GM12878 (cell line): ENCODE measurements at regions of chr5 and their contacts with region 1.

Region 1: DNA sequence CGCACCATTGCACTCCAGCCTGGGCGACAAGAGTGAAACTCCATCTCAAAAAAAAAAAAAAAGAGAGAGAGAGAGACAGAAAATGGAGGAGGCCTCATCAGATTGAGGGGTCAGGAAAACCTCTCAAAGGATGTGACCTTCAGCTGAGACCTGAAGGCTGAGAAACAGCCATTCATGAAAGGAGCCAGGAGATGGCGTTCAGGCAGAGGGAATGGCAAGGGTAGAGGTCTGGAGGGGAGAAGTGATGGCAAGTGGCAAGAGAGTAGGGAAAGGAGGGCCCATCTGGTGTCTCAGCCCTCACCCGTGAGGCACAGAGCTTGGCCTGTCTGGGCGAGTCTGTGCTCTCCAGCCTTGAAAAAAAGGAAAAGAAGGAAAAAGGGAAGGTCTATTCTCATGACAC is 17.0 kb downstream of the CAMK2A start:
- DNase-seq: no peak
- ATAC-seq: peak; percentile 83
- H3K4me3 ChIP-seq: no peak overlapping the region
- H3K27ac ChIP-seq: no peak overlapping the region
- H3K4me1 ChIP-seq: no peaks in the 10 kb centered on the region
- H3K27me3 ChIP-seq: peaks cover 3 to 4% of the 10 kb centered on the region in 2 experiments; a peak in 3 of 4 replicates
- CTCF ChIP-seq: peak; percentile 36 to 50 (median 45); a peak in 4 of 6 replicates
- EP300 ChIP-seq: no peak
- POLR2A ChIP-seq: no peak
- RAD21 ChIP-seq: peak; percentile 69

Region 2: GRCh38 chr5:150258130-150258529 is 14.4 kb before region 1 on chr5:
- CTCF ChIA-PET with region 1: interaction called, 10 read pairs
- POLR2A ChIA-PET with region 1: no interaction called
- RAD21 ChIA-PET with region 1: no interaction called
- SMC1A ChIA-PET with region 1: no interaction called
- in situ Hi-C with region 1: no loop called
- intact Hi-C with region 1: no loop called
- DNase-seq: no peak
- ATAC-seq: peak; percentile 74
- H3K4me3 ChIP-seq: no peak overlapping the region
- H3K27ac ChIP-seq: no peak overlapping the region
- H3K4me1 ChIP-seq: no peaks in the 10 kb centered on the region
- H3K27me3 ChIP-seq: no peaks in the 10 kb centered on the region
- CTCF ChIP-seq: no peak
- EP300 ChIP-seq: no peak
- POLR2A ChIP-seq: no peak
- RAD21 ChIP-seq: no peak

Region 3: GRCh38 chr5:150350524-150351344 is 78.2 kb after region 1 on chr5:
- CTCF ChIA-PET with region 1: interaction called, 27 read pairs
- POLR2A ChIA-PET with region 1: no interaction called
- RAD21 ChIA-PET with region 1: interaction called, 14 read pairs
- SMC1A ChIA-PET with region 1: interaction called, 5 read pairs
- in situ Hi-C with region 1: no loop called
- intact Hi-C with region 1: loop called (anchors 1 kb)
- DNase-seq: peak; percentile 13
- ATAC-seq: peak; percentile 99
- H3K4me3 ChIP-seq: no peak overlapping the region
- H3K27ac ChIP-seq: no peak overlapping the region
- H3K4me1 ChIP-seq: peaks cover 8% of the 10 kb centered on the region; the same call in 1 of the 2 replicates
- H3K27me3 ChIP-seq: no peaks in the 10 kb centered on the region
- CTCF ChIP-seq: peak; percentile 69 to 79 (median 73)
- EP300 ChIP-seq: no peak
- POLR2A ChIP-seq: no peak
- RAD21 ChIP-seq: peak; percentile 74

Region 4: DNA sequence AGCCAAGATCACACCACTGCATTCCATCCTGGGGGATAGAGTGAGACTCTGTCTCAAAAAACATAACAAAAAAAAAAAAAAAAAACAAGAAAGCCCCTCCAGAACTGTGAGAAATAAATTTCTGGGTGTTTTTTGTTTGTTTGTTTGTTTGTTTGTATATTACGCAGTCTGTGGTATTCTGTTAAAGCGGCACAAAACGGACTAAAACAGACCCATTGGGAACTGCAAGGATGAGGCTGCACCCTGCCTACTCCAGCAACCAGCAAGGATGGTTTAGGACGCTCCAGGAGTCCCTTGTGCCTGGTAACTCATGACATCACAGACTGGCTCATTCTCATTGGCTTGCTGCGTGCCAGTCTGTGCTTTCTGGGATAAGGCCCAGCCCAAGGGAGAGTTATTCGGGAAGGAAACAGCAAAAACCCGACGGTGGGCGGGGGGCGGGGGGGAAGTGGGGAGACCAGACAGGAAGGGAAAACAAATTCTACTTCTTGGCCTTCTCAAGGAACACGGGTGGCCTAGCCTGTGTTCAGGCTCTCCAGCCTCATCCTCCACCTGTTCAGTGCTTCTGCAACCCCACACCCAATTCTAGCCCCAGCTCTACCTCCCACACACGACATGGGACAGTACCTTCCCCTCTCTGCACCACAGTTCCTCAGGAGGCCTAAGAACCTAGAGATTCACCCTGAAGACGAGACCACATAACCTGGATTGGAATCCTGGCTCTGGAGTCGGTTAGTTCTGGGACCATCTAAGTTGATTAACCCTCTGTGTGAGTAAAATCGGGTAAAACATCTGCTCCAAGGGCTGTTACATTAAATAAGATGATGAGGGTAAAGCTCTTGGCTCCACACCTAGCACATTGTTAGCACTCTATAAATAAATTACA is 137.4 kb after region 1 on chr5:
- CTCF ChIA-PET with region 1: no interaction called
- POLR2A ChIA-PET with region 1: no interaction called
- RAD21 ChIA-PET with region 1: no interaction called
- SMC1A ChIA-PET with region 1: no interaction called
- in situ Hi-C with region 1: no loop called
- intact Hi-C with region 1: no loop called
- DNase-seq: peak; percentile 84
- ATAC-seq: peak; percentile 13
- H3K4me3 ChIP-seq: peak overlapping the region; percentile 99
- H3K27ac ChIP-seq: peak overlapping the region; percentile 100
- H3K4me1 ChIP-seq: peaks cover 32% of the 10 kb centered on the region
- H3K27me3 ChIP-seq: no peaks in the 10 kb centered on the region
- CTCF ChIP-seq: no peak
- EP300 ChIP-seq: no peak
- POLR2A ChIP-seq: peak; percentile 89
- RAD21 ChIP-seq: no peak